ENCODE measurements at regions of chr12 and their contacts with region 1.

Region 1: GRCh38 chr12:132925597-132926416 is 30.3 kb downstream of the ZNF605 start:
- DNase-seq: no peak
- H3K4me3 ChIP-seq: peak overlapping the region in 1 of 4 donors; percentile 7
- H3K27ac ChIP-seq: no peak overlapping the region
- H3K4me1 ChIP-seq: no peaks in the 10 kb centered on the region
- H3K27me3 ChIP-seq: no peaks in the 10 kb centered on the region
- CTCF ChIP-seq: no peak
- POLR2A ChIP-seq: no peak

Region 2: GRCh38 chr12:132881818-132882217 is 44.0 kb before region 1 on chr12:
- intact Hi-C with region 1: no loop called
- DNase-seq: no peak
- H3K4me3 ChIP-seq: no peak overlapping the region
- H3K27ac ChIP-seq: no peak overlapping the region
- H3K4me1 ChIP-seq: peaks cover 0 to 8% of the 10 kb centered on the region in 2 donors
- H3K27me3 ChIP-seq: no peaks in the 10 kb centered on the region
- CTCF ChIP-seq: no peak
- POLR2A ChIP-seq: no peak

Region 3: GRCh38 chr12:132966676-132967415 is 41.0 kb after region 1 on chr12:
- intact Hi-C with region 1: no loop called
- DNase-seq: peak in 1 of 7 donors; percentile 23
- H3K4me3 ChIP-seq: no peak overlapping the region
- H3K27ac ChIP-seq: no peak overlapping the region
- H3K4me1 ChIP-seq: no peaks in the 10 kb centered on the region
- H3K27me3 ChIP-seq: no peaks in the 10 kb centered on the region
- CTCF ChIP-seq: no peak
- POLR2A ChIP-seq: no peak

Region 4: GRCh38 chr12:133046698-133047097 is 120.9 kb after region 1 on chr12:
- intact Hi-C with region 1: no loop called
- DNase-seq: no peak
- H3K4me3 ChIP-seq: no peak overlapping the region
- H3K27ac ChIP-seq: no peak overlapping the region
- H3K4me1 ChIP-seq: no peaks in the 10 kb centered on the region
- H3K27me3 ChIP-seq: no peaks in the 10 kb centered on the region
- CTCF ChIP-seq: no peak
- POLR2A ChIP-seq: no peak

Region 5: DNA sequence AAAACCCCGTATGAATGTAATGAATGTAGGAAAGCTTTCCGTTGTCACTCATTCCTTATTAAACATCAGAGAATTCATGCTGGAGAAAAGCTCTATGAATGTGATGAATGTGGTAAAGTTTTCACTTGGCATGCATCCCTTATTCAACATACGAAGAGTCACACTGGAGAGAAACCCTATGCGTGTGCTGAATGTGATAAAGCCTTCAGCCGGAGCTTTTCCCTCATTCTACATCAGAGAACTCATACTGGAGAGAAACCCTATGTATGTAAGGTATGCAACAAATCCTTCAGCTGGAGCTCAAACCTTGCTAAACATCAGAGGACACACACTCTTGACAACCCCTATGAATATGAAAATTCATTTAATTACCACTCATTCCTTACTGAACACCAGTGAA is 180.4 kb after region 1 on chr12:
- intact Hi-C with region 1: loop called in 1 of 2 experiments (anchors 5 kb)
- DNase-seq: no peak
- H3K4me3 ChIP-seq: peak overlapping the region in 1 of 4 donors; percentile 16
- H3K27ac ChIP-seq: no peak overlapping the region
- H3K4me1 ChIP-seq: no peaks in the 10 kb centered on the region
- H3K27me3 ChIP-seq: no peaks in the 10 kb centered on the region
- CTCF ChIP-seq: no peak
- POLR2A ChIP-seq: no peak

Measured in adrenal gland (tissue), 19 donors.